B cell (primary cell): ENCODE measurements at regions of chr3 and their contacts with region 1.

Region 1: DNA sequence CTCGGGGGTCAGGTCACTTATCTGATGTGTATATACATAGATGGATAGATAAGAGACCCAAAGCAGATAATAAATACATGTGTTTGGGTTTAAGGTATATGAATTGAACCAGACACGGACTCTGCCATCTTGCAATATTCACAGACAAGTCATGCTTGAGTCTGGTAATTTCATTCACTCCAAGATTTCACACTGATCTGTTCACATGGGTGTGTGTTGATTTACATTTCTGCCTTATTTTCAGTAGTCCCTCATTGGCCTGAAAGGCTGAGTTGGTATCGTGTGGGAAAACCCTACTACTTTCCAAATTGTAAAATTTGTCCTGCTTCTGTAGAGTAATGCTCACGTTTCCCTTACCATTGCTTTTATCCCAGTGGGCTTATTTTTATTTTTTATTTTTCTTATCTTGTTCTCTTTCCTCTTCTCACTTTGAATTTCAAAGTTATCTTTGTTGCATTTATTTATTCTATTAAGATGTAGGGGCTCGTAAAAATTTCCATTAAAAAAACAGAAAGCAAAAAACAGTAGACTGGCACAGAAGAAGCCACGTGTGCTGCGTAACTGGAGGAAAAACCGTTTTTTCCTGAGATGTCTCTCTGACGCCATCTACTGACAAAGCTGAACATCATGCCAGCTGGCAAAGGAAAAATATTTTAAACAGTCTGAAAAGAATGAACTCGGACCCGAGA is 10.8 kb upstream of the MFSD1 start:
- DNase-seq: peak; percentile 67
- ATAC-seq: peak; percentile 47
- H3K4me3 ChIP-seq: no peak overlapping the region
- H3K4me3 Mint-ChIP-seq: peak overlapping the region; percentile 42
- H3K27ac ChIP-seq: no peak overlapping the region
- H3K27ac Mint-ChIP-seq: no peak overlapping the region
- H3K4me1 ChIP-seq: peaks cover 5 to 7% of the 10 kb centered on the region in 2 donors
- H3K4me1 Mint-ChIP-seq: peaks cover 3% of the 10 kb centered on the region
- H3K27me3 ChIP-seq: no peaks in the 10 kb centered on the region
- H3K27me3 Mint-ChIP-seq: peaks cover 4% of the 10 kb centered on the region
- CTCF ChIP-seq: peak; percentile 86

Region 2: GRCh38 chr3:157618075-157618760 is 1172.8 kb before region 1 on chr3:
- CTCF ChIA-PET with region 1: no interaction called
- POLR2A ChIA-PET with region 1: no interaction called
- intact Hi-C with region 1: loop called (anchors 5 kb)
- DNase-seq: peak; percentile 62
- ATAC-seq: peak; percentile 84
- H3K4me3 ChIP-seq: no peak overlapping the region
- H3K4me3 Mint-ChIP-seq: no peak overlapping the region
- H3K27ac ChIP-seq: no peak overlapping the region
- H3K27ac Mint-ChIP-seq: no peak overlapping the region
- H3K4me1 ChIP-seq: no peaks in the 10 kb centered on the region
- H3K4me1 Mint-ChIP-seq: peaks cover 4% of the 10 kb centered on the region
- H3K27me3 ChIP-seq: peaks cover 0 to 4% (median 0%) of the 10 kb centered on the region in 4 experiments
- H3K27me3 Mint-ChIP-seq: peaks cover 31% of the 10 kb centered on the region
- CTCF ChIP-seq: peak; percentile 80

Region 3: GRCh38 chr3:158659454-158660237 is 131.4 kb before region 1 on chr3:
- CTCF ChIA-PET with region 1: interaction called, 13 read pairs
- POLR2A ChIA-PET with region 1: no interaction called
- intact Hi-C with region 1: loop called (anchors 5 kb)
- DNase-seq: peak; percentile 41
- ATAC-seq: peak; percentile 54
- H3K4me3 ChIP-seq: no peak overlapping the region
- H3K4me3 Mint-ChIP-seq: no peak overlapping the region
- H3K27ac ChIP-seq: no peak overlapping the region
- H3K27ac Mint-ChIP-seq: no peak overlapping the region
- H3K4me1 ChIP-seq: no peaks in the 10 kb centered on the region
- H3K4me1 Mint-ChIP-seq: no peaks in the 10 kb centered on the region
- H3K27me3 ChIP-seq: no peaks in the 10 kb centered on the region
- H3K27me3 Mint-ChIP-seq: no peaks in the 10 kb centered on the region
- CTCF ChIP-seq: peak; percentile 71

Region 4: GRCh38 chr3:158672293-158673176 is 118.5 kb before region 1 on chr3 and contains the start of gene LXN:
- CTCF ChIA-PET with region 1: no interaction called
- POLR2A ChIA-PET with region 1: no interaction called
- intact Hi-C with region 1: loop called (anchors 1 kb)
- DNase-seq: peak; percentile 78
- ATAC-seq: peak; percentile 97
- H3K4me3 ChIP-seq: peak within 1 kb of the TSS; percentile 58 to 80 (median 76)
- H3K4me3 Mint-ChIP-seq: peak within 1 kb of the TSS; percentile 96
- H3K27ac ChIP-seq: peak within 1 kb of the TSS; percentile 44 to 58
- H3K27ac Mint-ChIP-seq: peak within 1 kb of the TSS; percentile 92
- H3K4me1 ChIP-seq: peaks cover 11 to 12% of the 10 kb centered on the region in 2 donors
- H3K4me1 Mint-ChIP-seq: peaks cover 25% of the 10 kb centered on the region
- H3K27me3 ChIP-seq: no peaks in the 10 kb centered on the region
- H3K27me3 Mint-ChIP-seq: no peaks in the 10 kb centered on the region
- CTCF ChIP-seq: peak; percentile 48
- total RNA-seq, gene LXN: 5.1 and 7.9 TPM in 2 replicates

Region 5: DNA sequence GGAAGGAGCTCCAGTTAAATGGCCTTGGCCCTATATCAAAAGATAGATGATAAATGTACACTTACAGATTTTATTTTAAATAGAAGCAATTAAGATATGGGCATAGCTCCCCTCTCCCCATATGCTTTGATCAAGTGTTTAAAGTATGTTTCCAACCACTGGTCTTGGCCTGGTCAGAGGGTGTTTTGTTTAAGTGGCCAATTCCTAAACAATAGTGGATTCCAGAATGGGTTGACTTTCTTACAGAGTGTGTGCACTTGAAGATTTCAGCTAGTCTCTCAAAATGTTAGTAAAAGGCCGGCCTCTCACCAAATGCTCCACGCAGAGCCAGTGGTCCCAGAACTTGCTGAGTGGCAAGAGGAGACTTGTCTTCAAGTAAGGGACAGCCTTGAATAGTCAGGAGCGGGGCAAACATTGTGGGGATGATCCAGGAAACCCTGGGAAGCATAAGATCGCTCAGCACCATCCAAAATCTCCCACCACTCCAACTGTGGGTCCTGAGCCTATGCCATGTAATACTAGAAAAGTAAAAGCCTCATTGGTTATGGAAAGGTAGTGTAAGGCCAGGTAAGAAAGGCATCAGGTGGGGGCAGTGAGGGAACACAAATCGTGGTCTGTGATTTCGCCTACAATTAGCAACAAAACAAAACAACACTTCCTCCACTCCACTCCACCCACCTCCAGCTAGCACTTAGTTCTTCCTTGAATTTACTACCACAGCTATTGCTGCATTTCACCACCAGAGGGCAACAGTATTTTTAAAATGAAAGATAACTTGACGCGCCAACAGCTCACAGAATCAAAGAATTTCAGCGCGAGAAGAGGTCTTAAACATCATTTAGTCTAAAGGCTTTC is 63.6 kb before region 1 on chr3:
- CTCF ChIA-PET with region 1: interaction called, 122 read pairs
- POLR2A ChIA-PET with region 1: no interaction called
- intact Hi-C with region 1: loop called (anchors 1 kb)
- DNase-seq: peak; percentile 74
- ATAC-seq: peak; percentile 62
- H3K4me3 ChIP-seq: peak overlapping the region in 1 of 5 experiments; percentile 56
- H3K4me3 Mint-ChIP-seq: peak overlapping the region; percentile 25
- H3K27ac ChIP-seq: no peak overlapping the region
- H3K27ac Mint-ChIP-seq: no peak overlapping the region
- H3K4me1 ChIP-seq: peaks cover 20 to 27% of the 10 kb centered on the region in 2 donors
- H3K4me1 Mint-ChIP-seq: peaks cover 23% of the 10 kb centered on the region
- H3K27me3 ChIP-seq: peaks cover 0 to 9% (median 3%) of the 10 kb centered on the region in 4 experiments
- H3K27me3 Mint-ChIP-seq: peaks cover 5% of the 10 kb centered on the region
- CTCF ChIP-seq: peak; percentile 86